ENCODE measurements at regions of chr11 and their contacts with region 1.

Region 1: DNA sequence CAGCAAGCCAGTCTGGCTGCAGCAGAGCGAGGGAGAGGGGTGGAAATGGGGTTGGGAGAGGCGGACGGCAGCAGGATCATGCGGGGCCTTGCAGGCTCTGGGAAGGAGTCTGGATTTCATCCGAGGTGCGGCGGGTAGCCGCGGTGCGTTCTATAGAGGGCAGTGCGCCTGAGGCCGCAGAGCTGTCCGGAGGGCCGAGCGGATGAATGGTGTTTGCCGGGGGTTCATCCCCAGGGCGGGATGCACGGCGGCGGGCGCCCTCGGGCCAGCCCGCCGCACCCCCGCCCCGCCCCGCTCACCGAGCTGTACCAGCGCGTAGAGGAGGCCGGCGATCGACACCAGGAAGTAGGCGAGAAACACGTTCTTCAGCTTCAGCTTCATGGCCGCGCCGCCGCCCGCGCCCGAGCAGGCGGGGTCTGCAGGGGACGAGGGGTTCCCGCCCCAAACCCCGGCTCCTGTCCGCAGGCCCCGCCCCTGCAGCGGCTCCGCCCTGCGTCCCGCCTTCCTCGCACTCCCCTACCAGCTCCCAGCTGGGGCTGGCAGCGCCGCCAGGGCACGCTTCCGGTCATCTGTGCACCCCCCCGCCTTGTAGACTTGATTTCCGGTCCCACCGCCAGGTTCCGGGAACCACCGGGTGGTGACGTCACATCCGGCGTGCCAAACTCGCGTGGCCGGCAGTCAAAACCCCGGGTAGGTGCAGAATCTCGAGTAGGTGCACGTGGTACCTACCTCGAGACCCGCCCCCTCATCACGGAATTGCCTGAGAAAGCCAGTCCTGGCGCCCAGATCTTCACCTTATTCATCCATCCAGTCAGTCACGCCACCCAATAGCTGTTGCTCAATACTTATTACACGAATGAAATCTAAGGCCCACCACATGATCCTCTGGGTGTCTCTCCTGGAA is at the start of gene B3GAT3:
- DNase-seq: peak; percentile 87 to 98 (median 95)
- ATAC-seq: peak; percentile 83 to 85
- H3K4me3 Mint-ChIP-seq: peak within 1 kb of the TSS; percentile 86 to 97 (median 94)
- H3K27ac Mint-ChIP-seq: peak within 1 kb of the TSS; percentile 92 to 99 (median 98)
- H3K4me1 Mint-ChIP-seq: peaks cover 13 to 36% (median 32%) of the 10 kb centered on the region in 4 donors
- H3K27me3 Mint-ChIP-seq: peaks cover 0 to 2% (median 0%) of the 10 kb centered on the region in 5 donors
- polyA plus RNA-seq, gene B3GAT3: 35.6 to 51.3 (median 40.3) TPM

Region 2: GRCh38 chr11:62508268-62509058 is 113.4 kb before region 1 on chr11:
- POLR2A ChIA-PET with region 1: no interaction called
- DNase-seq: peak in 1 of 10 donors; percentile 14
- ATAC-seq: no peak
- H3K4me3 Mint-ChIP-seq: no peak overlapping the region
- H3K27ac Mint-ChIP-seq: no peak overlapping the region
- H3K4me1 Mint-ChIP-seq: peaks cover 0 to 13% (median 0%) of the 10 kb centered on the region in 4 donors
- H3K27me3 Mint-ChIP-seq: peaks cover 0 to 18% (median 5%) of the 10 kb centered on the region in 5 donors

Region 3: DNA sequence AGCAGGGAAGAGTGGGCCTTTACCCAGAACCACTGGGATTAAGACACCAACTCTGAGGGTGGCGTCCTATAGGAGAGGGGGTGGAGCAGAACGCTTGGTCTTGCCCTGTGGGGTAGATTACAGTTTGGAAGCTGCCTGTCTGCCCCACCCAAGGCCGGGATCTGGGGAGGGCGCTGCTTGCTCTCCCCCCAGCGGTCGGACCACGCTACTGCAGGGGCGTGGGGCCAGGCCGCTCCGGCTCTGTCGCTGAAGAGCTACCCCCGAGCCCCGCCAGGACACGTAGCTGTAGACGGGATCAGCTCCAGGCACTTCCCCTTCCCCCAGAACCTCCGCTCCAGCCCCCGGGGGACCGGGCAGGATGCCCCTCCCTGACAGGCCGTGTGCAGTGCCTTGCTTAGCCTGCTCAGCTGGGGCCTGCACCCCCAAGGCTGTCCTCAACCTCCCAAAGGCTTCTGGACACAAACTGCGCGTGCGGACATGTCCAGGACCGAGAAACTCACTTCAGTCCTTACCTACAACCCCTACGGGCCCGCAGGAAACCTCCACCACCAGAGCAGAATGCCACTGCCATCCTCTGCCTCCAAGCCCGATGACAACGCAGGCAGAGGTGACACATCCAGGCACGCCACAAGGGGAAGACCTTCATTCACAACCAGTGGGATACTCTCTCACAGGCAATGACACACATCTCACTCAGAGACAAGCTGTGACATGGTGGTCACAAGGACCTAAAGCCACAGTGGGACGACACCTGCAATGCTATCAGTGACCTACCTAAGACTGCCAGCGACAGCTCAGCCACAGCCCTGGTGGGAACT is 78.9 kb before region 1 on chr11:
- POLR2A ChIA-PET with region 1: no interaction called
- DNase-seq: peak; percentile 49 to 80 (median 71)
- ATAC-seq: peak; percentile 28 to 39
- H3K4me3 Mint-ChIP-seq: peak overlapping the region; percentile 62 to 95 (median 92)
- H3K27ac Mint-ChIP-seq: peak overlapping the region; percentile 68 to 99 (median 88)
- H3K4me1 Mint-ChIP-seq: peaks cover 40 to 79% (median 74%) of the 10 kb centered on the region in 4 donors
- H3K27me3 Mint-ChIP-seq: no peaks in the 10 kb centered on the region

Region 4: GRCh38 chr11:62645956-62646824 is 24.4 kb after region 1 on chr11 and contains the start of gene GANAB:
- POLR2A ChIA-PET with region 1: interaction called, 70 read pairs
- DNase-seq: peak; percentile 94 to 99 (median 97)
- ATAC-seq: peak; percentile 97 to 98
- H3K4me3 Mint-ChIP-seq: peak within 1 kb of the TSS; percentile 92 to 99 (median 97)
- H3K27ac Mint-ChIP-seq: peak within 1 kb of the TSS; percentile 90 to 99 (median 98)
- H3K4me1 Mint-ChIP-seq: peaks cover 9 to 50% (median 32%) of the 10 kb centered on the region in 4 donors
- H3K27me3 Mint-ChIP-seq: no peaks in the 10 kb centered on the region
- polyA plus RNA-seq, gene GANAB: 171 to 197 (median 174) TPM

Region 5: DNA sequence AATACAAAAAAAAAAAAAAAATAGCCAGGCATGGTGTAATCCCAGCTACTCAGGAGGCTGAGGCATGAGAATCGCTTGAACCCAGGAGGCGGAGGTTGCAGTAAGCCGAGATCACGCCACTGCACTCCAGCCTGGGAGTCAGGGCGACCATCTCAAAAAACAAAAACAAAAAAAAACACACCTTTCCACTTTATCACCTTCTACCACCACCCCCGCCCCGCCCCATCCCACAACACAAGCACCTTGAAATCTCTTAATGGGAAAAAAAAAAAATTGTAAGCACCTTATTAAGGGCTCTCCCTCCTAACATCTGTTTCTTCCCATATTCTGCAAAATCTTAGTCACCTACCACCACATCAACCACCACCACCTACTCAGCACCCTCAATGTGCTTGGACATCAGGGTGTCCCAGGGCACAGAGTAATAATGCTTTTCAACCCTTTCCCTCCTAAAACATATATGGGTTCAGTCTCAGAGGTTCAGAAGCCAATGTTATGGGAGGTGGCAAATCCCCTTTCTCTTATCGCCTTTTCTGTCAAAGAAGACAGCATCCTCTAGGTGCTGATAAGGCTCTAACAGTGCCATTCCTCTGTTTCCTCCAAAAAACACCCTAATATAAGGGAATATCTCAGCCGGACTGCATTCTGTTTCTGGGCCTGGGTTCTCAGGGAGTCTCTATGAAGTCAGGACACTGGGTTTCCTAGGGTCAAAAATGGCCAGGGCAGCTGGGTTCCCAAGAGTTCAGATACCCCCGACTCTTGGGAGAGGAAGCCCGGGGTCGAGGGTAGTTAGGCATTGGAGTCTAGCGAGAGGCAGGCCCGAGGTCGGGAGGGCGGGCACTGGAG is 30.6 kb after region 1 on chr11:
- POLR2A ChIA-PET with region 1: interaction called, 58 read pairs
- DNase-seq: peak in 4 of 10 donors; percentile 34 to 57 (median 44)
- ATAC-seq: peak; percentile 6 to 49
- H3K4me3 Mint-ChIP-seq: peak overlapping the region; percentile 86 to 96 (median 92)
- H3K27ac Mint-ChIP-seq: peak overlapping the region; percentile 82 to 100 (median 94)
- H3K4me1 Mint-ChIP-seq: peaks cover 12 to 37% (median 21%) of the 10 kb centered on the region in 4 donors
- H3K27me3 Mint-ChIP-seq: no peaks in the 10 kb centered on the region

Region 6: DNA sequence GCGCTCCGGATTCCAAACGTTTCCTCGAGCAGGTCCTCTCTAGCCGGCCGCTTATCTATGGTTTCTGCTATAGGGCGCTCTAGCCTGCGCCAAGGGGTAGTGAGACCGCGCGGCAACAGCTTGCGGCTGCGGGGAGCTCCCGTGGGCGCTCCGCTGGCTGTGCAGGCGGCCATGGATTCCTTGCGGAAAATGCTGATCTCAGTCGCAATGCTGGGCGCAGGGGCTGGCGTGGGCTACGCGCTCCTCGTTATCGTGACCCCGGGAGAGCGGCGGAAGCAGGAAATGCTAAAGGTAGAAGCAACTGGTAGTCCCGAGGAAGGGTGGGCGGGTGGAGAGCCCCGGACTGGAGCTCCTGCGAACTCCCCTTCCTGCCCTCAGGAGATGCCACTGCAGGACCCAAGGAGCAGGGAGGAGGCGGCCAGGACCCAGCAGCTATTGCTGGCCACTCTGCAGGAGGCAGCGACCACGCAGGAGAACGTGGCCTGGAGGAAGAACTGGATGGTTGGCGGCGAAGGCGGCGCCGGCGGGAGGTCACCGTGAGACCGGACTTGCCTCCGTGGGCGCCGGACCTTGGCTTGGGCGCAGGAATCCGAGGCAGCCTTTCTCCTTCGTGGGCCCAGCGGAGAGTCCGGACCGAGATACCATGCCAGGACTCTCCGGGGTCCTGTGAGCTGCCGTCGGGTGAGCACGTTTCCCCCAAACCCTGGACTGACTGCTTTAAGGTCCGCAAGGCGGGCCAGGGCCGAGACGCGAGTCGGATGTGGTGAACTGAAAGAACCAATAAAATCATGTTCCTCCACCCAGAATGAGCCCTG is 50.0 kb after region 1 on chr11 and contains the starts of genes LBHD1 and UQCC3:
- POLR2A ChIA-PET with region 1: interaction called, 77 read pairs
- DNase-seq: peak; percentile 52 to 85 (median 68)
- ATAC-seq: peak; percentile 75 to 76
- H3K4me3 Mint-ChIP-seq: peak within 1 kb of the TSS; percentile 96 to 100 (median 98)
- H3K27ac Mint-ChIP-seq: peak within 1 kb of the TSS; percentile 92 to 99 (median 96)
- H3K4me1 Mint-ChIP-seq: peaks cover 22 to 67% (median 50%) of the 10 kb centered on the region in 4 donors
- H3K27me3 Mint-ChIP-seq: no peaks in the 10 kb centered on the region
- polyA plus RNA-seq, gene LBHD1: 2.4 to 8.3 (median 4.4) TPM
- polyA plus RNA-seq, gene UQCC3: 9.1 to 9.7 (median 9.6) TPM

Measured in naive thymus-derived CD8-positive, alpha-beta T cell (primary cell).